Cardiac septum (tissue), 1 donor: ENCODE measurements at regions of chr14 and their contacts with region 1.

Region 1: DNA sequence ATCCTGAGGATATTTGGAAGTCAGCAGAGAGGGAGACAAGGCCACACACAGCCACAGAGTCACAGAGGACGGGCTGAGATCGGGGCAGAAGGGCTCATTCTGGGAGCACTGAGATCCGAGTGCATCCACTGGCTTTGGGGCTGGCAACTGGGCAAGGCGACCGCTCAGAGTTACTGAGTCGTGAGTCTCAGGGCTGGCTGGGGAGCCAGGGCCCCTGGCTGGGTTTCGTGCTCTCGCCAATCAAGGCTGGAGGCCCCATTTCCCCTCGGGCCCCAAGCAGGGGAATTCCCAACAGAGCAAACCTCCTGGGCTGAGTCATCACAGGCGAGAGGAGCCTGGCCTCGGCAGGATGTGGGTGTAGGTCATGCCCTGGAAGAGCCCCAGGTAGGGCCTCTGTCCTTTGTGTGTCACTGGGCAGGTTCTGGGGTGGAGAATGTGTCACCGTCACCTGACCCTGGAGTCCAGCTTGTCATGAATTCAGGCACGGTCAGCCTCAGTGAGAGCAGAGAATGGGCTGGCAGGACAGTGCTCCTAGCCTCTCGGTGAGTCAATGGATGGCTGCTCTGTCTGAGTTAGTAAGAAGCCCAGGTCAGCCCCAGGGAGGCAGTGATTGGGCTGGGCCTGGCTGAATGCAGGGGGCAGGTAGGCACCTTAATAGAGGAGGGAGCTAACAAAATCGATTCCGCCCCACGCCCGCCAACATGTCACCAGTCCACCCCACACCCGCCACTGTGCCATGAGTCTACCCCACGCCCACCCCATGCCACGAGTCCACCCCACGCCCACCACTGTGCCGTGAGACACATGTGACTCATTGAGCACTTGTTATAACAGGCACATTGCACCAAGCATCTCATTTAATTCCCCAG is 16.9 kb downstream of the ASB2 start:
- DNase-seq: peak; percentile 87

Region 2: DNA sequence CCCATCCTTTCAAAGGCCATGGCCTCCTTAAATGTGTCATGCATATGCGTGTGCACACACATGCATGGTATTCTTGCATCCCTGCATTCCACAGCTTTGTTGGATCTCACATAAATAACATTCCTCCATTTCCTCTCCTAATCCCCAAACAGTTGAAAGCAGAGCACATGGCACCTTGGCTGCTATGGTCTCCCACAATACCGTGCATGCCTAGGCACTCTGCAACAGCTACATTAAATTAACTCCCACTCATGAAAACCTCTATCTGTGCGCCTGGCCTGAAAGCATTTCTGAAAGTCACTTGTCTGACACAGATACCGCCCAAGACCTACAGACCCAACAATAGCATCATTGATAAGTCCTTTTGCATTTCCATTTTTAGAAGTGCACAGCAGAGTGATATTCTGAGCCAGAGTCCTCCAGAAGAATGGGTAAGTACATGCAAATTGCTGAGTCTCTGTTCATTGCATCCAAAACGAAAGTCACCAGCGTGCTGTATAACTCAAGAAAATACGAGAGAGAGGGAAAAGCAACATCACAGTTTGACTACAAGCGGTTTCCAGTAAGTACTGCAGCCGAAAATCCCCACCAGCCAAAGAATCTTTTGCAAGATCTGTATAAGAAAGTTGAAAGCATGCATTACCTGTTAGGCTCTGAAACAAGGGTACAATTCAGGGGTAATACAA is 16.5 kb after region 1 on chr14:
- intact Hi-C with region 1: loop called (anchors 2 kb)
- DNase-seq: no peak

Region 3: DNA sequence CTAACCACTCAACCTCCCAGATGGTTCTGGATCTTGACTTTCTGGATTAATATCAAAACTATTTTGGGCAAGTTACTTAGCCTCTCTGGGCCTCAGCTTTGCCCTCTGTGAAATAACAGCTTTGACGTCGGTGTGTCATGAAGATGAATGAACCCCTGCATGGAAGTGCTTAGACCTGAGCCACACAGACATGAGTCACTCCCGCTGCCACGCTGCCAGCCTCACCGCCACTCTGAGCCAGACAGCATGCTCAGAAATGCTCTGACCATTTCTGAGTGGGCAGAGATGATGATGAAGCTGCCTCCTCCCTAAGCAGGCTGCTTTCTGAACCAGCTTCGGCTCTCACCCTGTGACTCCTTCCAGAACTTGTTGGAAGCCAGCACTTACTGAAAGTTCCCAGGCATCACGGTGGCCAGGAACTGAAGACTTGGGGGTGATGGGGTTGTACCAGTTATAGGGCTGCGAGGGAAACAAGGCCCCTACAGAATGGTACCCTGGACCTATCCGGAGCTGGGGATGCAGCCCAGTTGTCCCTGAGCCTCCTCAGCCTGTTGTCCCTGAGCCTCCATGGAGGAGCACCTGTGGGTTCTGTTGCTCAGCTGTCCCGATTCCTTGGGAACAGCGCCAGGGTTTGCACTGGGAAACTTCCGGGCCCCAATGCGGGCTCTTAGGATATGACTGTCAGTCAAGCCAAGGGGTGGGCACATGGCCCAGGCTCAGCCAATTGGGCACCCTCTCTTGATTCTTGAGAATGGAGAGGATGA is 35.6 kb after region 1 on chr14:
- intact Hi-C with region 1: loop called (anchors 5 kb)
- DNase-seq: no peak

Region 4: DNA sequence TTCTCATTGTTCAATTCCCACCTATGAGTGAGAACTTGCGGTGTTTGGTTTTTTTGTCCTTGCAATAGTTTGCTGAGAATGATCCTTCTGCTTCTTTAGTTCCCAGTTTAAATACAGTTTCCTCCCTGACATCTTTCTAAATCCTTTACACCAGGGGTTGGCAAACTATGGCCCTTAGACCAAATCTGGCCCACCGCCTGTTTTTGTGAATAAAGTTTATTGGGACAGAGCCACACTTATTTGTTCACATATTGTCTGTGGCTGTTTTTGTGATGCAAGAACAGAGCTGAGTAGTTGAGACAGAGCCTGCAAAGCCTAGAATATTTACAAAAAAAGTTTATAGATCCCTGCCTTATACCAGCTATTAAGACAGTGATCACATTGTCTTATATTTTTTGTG is 279.9 kb after region 1 on chr14:
- intact Hi-C with region 1: no loop called
- DNase-seq: no peak